Uterus (tissue), 4 donors: ENCODE measurements at regions of chr2 and their contacts with region 1.

Region 1: GRCh38 chr2:96951093-96951654 is 35.2 kb downstream of the FAM178B start:
- DNase-seq: peak; percentile 74 to 75
- H3K4me3 ChIP-seq: no peak overlapping the region
- H3K27ac ChIP-seq: peak overlapping the region; percentile 79 to 89
- H3K4me1 ChIP-seq: peaks cover 30 to 32% of the 10 kb centered on the region in 2 donors
- H3K27me3 ChIP-seq: no peaks in the 10 kb centered on the region
- CTCF ChIP-seq: peak; percentile 91 to 97 (median 95)
- POLR2A ChIP-seq: no peak

Region 2: GRCh38 chr2:96618604-96619283 is 332.4 kb before region 1 on chr2:
- intact Hi-C with region 1: no loop called
- DNase-seq: peak in 1 of 2 donors; percentile 54
- H3K4me3 ChIP-seq: no peak overlapping the region
- H3K27ac ChIP-seq: peak overlapping the region; percentile 22 to 65
- H3K4me1 ChIP-seq: no peaks in the 10 kb centered on the region
- H3K27me3 ChIP-seq: no peaks in the 10 kb centered on the region
- CTCF ChIP-seq: no peak
- POLR2A ChIP-seq: no peak

Region 3: GRCh38 chr2:96687266-96687665 is 263.9 kb before region 1 on chr2:
- intact Hi-C with region 1: no loop called
- DNase-seq: no peak
- H3K4me3 ChIP-seq: no peak overlapping the region
- H3K27ac ChIP-seq: no peak overlapping the region
- H3K4me1 ChIP-seq: no peaks in the 10 kb centered on the region
- H3K27me3 ChIP-seq: no peaks in the 10 kb centered on the region
- CTCF ChIP-seq: no peak
- POLR2A ChIP-seq: no peak

Region 4: DNA sequence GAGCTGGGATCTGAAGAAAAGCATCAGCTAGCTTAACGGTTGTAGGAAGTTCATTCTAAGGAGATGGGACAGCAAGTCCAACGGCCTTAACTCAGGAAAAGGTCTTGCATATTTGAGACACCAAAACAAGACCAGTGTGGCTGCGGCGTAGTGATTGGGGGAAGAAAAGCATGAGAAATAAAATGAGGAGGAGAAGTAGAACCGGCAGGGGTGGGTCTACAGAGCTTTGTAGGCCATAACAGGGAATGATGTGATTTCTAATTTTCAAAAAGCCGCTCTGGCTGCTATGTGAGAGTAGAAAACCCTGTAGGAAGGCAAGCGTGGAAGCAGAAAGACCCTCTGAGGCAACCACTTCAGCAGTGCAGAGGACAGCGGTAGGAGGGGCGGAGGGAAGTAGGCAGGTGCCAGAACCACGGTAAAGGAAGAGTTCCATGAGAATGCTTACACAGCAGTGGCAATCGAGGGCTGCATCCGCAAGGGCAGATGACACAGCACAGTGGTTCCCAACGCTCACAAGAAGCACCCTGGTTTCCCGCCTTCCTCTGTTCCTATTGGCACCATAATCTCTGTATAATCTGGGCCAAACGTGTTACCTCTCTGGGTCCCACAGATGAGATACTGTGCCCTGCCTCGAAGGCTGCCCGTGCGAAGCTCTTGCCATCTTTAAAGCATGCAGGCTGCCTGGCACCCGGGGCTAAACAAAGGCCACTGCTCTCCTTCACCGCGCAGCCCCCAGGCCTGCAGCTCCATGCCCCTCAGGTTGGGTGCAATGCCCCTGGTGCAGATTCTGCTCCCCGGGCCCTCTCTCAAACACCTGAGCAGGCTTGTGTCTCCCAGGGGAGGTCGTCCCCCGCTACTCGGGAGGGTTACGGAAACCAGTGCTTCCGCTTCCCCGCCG is 94.1 kb before region 1 on chr2:
- intact Hi-C with region 1: loop called (anchors 5 kb)
- DNase-seq: peak in 1 of 2 donors; percentile 40
- H3K4me3 ChIP-seq: peak overlapping the region; percentile 78 to 95
- H3K27ac ChIP-seq: peak overlapping the region; percentile 90 to 92
- H3K4me1 ChIP-seq: peaks cover 0 to 26% of the 10 kb centered on the region in 2 donors
- H3K27me3 ChIP-seq: no peaks in the 10 kb centered on the region
- CTCF ChIP-seq: no peak
- POLR2A ChIP-seq: no peak

Region 5: DNA sequence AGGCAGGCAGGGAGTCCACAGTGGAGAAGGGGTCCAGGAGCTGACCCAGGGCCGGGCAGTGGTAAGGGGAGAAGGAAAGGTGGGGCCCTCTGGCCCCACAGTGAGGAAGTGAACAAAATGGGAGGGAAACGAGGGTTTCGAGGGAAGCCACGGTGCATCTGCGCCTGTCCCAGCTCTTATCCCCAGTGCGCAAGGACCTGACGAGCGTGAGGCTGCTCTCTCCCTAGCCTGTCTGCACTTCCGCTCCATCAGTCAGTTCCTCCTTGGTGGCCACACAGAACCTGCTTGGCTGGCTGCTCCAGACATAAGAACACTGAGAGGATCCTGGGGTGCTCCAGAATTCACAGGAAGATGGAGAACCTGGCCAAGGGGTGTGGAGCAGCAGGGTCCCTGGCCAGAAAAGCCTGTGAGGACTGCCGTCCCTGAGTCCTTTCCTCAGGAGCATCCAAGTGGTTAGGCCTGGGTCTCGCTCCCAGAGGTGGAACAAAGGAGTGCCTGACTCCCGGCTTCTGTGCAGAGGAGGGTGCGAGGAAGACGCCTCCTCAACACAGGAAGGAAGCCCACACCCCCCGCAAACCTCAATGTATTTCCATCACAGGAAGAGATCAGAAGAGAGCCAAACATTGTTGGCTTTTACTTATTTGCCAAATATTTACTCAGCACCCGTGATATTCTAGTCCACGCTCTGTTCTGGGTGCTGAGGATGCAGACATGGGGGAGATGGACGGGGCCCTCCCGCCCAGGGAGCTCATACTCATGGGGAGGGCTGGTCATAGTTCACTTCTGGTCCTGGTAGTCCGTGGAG is 37.6 kb before region 1 on chr2:
- intact Hi-C with region 1: loop called (anchors 5 kb)
- DNase-seq: no peak
- H3K4me3 ChIP-seq: no peak overlapping the region
- H3K27ac ChIP-seq: peak overlapping the region; percentile 65 to 72
- H3K4me1 ChIP-seq: peaks cover 0 to 5% of the 10 kb centered on the region in 2 donors
- H3K27me3 ChIP-seq: no peaks in the 10 kb centered on the region
- CTCF ChIP-seq: no peak
- POLR2A ChIP-seq: no peak